Gastrocnemius medialis (tissue), 4 donors: ENCODE measurements at regions of chr1 and their contacts with region 1.

Region 1: DNA sequence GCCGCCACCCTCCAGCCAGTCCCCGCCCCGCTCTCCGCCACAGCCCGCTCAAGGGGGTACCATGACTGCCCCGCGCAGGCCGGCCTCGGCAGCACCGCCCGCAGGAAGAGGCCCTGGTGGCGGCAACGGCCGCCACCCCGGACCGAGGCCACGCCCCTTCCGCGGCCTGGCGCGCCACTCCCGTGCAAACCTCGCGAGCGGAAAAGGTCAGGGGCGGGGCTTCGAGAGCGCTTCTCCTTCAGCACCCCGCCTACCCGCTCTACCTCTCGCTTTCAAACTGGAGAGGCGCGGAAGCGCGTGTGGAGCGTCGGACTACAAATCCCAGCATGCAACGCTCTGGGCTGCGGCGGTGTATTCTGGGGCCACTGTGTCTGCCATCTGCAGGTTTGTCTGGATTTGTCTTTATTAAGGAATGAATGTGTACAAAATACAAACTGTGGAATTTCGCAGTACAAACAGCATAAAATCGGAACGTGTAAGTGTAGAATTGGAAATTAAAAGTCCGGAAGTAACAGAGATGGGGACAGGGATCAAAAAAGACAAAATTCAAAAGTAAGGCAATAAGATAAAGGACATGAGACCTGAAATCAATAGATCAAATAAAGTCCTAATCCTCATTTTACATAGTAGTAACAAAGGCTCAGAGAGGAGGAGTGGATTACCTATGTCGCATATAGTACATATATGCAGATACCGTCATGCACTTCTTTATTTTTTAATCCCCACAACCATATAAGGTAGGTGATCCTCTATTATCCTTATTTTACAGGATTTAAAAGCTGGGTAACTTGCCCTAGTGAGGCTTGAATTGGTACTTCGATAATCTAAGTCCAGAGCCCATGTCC is 464 bp upstream of the ADSS2 start:
- DNase-seq: peak; percentile 99
- ATAC-seq: peak; percentile 92 to 94
- H3K4me3 ChIP-seq: peak overlapping the region; percentile 89 to 99 (median 94)
- H3K27ac ChIP-seq: peak overlapping the region; percentile 96 to 99 (median 98)
- H3K4me1 ChIP-seq: peaks cover 28% of the 10 kb centered on the region in 2 donors
- H3K27me3 ChIP-seq: no peaks in the 10 kb centered on the region
- CTCF ChIP-seq: peak in 4 of 5 experiments; percentile 29 to 53 (median 46)
- POLR2A ChIP-seq: no peak

Region 2: DNA sequence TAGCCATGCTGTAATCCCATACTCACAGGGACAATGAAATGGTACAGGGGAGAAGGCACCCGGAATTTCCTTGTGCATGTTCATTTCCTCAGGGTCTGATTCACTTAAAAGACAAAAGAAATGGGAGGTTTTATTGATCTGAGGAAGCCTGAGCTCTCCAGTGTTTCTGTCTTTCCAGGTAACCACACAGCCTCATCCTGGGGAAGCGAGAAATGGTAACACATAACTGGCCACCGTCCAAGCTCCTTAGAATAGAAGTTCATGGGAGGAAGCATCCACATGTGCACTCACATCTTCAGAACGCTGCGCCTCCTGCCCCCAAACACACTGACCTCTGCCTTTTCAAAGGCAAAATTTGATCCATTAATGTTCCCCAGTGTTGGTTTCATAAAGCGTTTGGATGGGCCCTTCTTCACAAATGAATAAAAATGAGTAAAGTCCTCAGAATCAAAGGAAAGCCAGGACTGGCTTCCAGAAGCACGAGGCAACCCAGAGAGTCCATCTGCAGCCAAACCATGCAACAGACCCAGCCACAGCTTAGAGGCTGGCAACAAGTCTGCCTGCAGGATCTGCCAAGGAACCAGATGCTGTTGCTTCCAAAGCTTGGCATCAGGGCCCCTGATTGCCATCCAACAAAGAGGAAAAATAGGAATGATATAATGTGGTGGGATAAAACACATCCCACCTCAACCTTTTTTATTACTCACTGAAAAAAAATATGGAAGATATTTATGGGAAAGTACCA is 280.8 kb before region 1 on chr1:
- in situ Hi-C with region 1: no loop called
- intact Hi-C with region 1: no loop called
- DNase-seq: peak in 1 of 2 donors; percentile 35
- ATAC-seq: peak; percentile 61 to 79
- H3K4me3 ChIP-seq: no peak overlapping the region
- H3K27ac ChIP-seq: peak overlapping the region in 1 of 4 donors; percentile 17
- H3K4me1 ChIP-seq: peaks cover 14 to 17% of the 10 kb centered on the region in 2 donors
- H3K27me3 ChIP-seq: no peaks in the 10 kb centered on the region
- CTCF ChIP-seq: no peak
- POLR2A ChIP-seq: no peak

Region 3: DNA sequence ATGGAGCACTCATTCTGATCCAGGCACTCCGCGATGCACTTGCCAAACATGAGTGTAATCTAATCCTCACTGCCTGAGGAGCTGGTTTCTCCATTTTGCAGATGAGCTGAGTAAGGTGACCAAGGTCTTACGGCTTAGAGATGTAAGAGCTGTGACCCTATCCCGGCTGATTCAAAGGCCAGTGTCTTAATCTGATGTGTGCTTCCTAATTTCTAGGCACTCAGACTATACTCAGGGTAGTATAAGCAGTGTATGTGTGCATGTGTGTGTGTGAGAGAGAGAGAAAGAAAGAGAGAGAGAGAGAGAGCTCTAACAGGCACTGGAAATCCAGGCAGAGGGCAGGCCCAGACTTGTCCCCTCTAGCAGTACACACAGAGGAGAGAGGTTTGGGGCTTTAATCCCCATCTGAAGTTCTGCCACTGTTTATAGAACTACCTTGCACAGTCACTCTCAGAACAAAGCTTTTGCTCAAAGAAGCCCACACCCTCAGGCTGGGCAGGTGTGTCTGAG is 212.9 kb before region 1 on chr1:
- in situ Hi-C with region 1: no loop called
- intact Hi-C with region 1: no loop called
- DNase-seq: no peak
- ATAC-seq: no peak
- H3K4me3 ChIP-seq: no peak overlapping the region
- H3K27ac ChIP-seq: no peak overlapping the region
- H3K4me1 ChIP-seq: peaks cover 5 to 9% of the 10 kb centered on the region in 2 donors
- H3K27me3 ChIP-seq: no peaks in the 10 kb centered on the region
- CTCF ChIP-seq: no peak
- POLR2A ChIP-seq: no peak

Region 4: GRCh38 chr1:244647819-244648218 is 195.6 kb after region 1 on chr1:
- in situ Hi-C with region 1: loop called in 3 of 4 experiments (anchors 5 to 25 kb)
- intact Hi-C with region 1: loop called (anchors 1 kb)
- DNase-seq: no peak
- ATAC-seq: no peak
- H3K4me3 ChIP-seq: no peak overlapping the region
- H3K27ac ChIP-seq: no peak overlapping the region
- H3K4me1 ChIP-seq: peaks cover 0 to 6% of the 10 kb centered on the region in 2 donors
- H3K27me3 ChIP-seq: no peaks in the 10 kb centered on the region
- CTCF ChIP-seq: no peak
- POLR2A ChIP-seq: no peak

Region 5: GRCh38 chr1:244835276-244836134 is 383.3 kb after region 1 on chr1 and contains the start of gene COX20:
- in situ Hi-C with region 1: no loop called
- intact Hi-C with region 1: loop called (anchors 10 kb)
- DNase-seq: peak; percentile 74 to 88
- ATAC-seq: peak; percentile 70 to 80
- H3K4me3 ChIP-seq: peak within 1 kb of the TSS; percentile 68 to 81 (median 76)
- H3K27ac ChIP-seq: peak within 1 kb of the TSS; percentile 96 to 99 (median 99)
- H3K4me1 ChIP-seq: peaks cover 11 to 33% of the 10 kb centered on the region in 2 donors
- H3K27me3 ChIP-seq: no peaks in the 10 kb centered on the region
- CTCF ChIP-seq: peak in 1 of 5 experiments; percentile 14
- POLR2A ChIP-seq: peak; percentile 65 to 66
- total RNA-seq, gene COX20: 22.7 to 72.0 (median 35.4) TPM

Region 6: GRCh38 chr1:245019910-245020486 is 567.8 kb after region 1 on chr1:
- in situ Hi-C with region 1: loop called in 1 of 4 experiments (anchors 25 kb)
- intact Hi-C with region 1: no loop called
- DNase-seq: no peak
- ATAC-seq: no peak
- H3K4me3 ChIP-seq: no peak overlapping the region
- H3K27ac ChIP-seq: no peak overlapping the region
- H3K4me1 ChIP-seq: no peaks in the 10 kb centered on the region
- H3K27me3 ChIP-seq: no peaks in the 10 kb centered on the region
- CTCF ChIP-seq: no peak
- POLR2A ChIP-seq: no peak